H1 (cell line): ENCODE measurements at regions of chr15 and their contacts with region 1.

Region 1: GRCh38 chr15:64893481-64894394 is 18.0 kb upstream of the ANKDD1A start:
- DNase-seq: peak; percentile 96
- H3K4me3 ChIP-seq: peak overlapping the region; percentile 21 to 62 (median 37); a peak in 6 of 8 replicates
- H3K27ac ChIP-seq: no peak overlapping the region; the same call in 1 of the 2 replicates
- H3K4me1 ChIP-seq: peaks cover 7 to 26% (median 14%) of the 10 kb centered on the region in 4 experiments; a peak in 6 of 7 replicates
- H3K27me3 ChIP-seq: no peaks in the 10 kb centered on the region
- CTCF ChIP-seq: no peak
- EP300 ChIP-seq: no peak
- POLR2A ChIP-seq: no peak
- RAD21 ChIP-seq: no peak

Region 2: GRCh38 chr15:64681424-64682024 is 212.2 kb before region 1 on chr15:
- CTCF ChIA-PET with region 1: no interaction called
- POLR2A ChIA-PET with region 1: no interaction called
- DNase-seq: peak in 1 of 2 experiments; percentile 41
- H3K4me3 ChIP-seq: no peak overlapping the region
- H3K27ac ChIP-seq: no peak overlapping the region
- H3K4me1 ChIP-seq: peaks cover 0 to 8% (median 1%) of the 10 kb centered on the region in 4 experiments; a peak in 5 of 7 replicates
- H3K27me3 ChIP-seq: no peaks in the 10 kb centered on the region
- CTCF ChIP-seq: peak; percentile 57 to 100 (median 95)
- EP300 ChIP-seq: no peak
- POLR2A ChIP-seq: 0 out of 3 replicates have a peak, but pooled peaks of 1 of the 2 experiments have one; percentile 31
- RAD21 ChIP-seq: peak; percentile 99

Region 3: GRCh38 chr15:64875641-64876223 is 18.0 kb before region 1 on chr15:
- CTCF ChIA-PET with region 1: interaction called, 11 read pairs
- POLR2A ChIA-PET with region 1: interaction called, 10 read pairs
- DNase-seq: no peak
- H3K4me3 ChIP-seq: no peak overlapping the region
- H3K27ac ChIP-seq: no peak overlapping the region
- H3K4me1 ChIP-seq: peaks cover 6 to 20% (median 10%) of the 10 kb centered on the region in 4 experiments
- H3K27me3 ChIP-seq: no peaks in the 10 kb centered on the region
- CTCF ChIP-seq: no peak
- EP300 ChIP-seq: no peak
- POLR2A ChIP-seq: no peak
- RAD21 ChIP-seq: no peak

Region 4: GRCh38 chr15:65110676-65111292 is 217.0 kb after region 1 on chr15:
- CTCF ChIA-PET with region 1: no interaction called
- POLR2A ChIA-PET with region 1: no interaction called
- DNase-seq: no peak
- H3K4me3 ChIP-seq: no peak overlapping the region
- H3K27ac ChIP-seq: no peak overlapping the region
- H3K4me1 ChIP-seq: no peaks in the 10 kb centered on the region
- H3K27me3 ChIP-seq: no peaks in the 10 kb centered on the region
- CTCF ChIP-seq: no peak
- EP300 ChIP-seq: no peak
- POLR2A ChIP-seq: no peak
- RAD21 ChIP-seq: no peak